Activated T-helper 1 cell treated with anti-CD3 and anti-CD28 coated beads, Interleukin-12 subunit alpha, Interleukin-12 subunit beta, Interleukin-2, Interleukin-4 antibody, amounts not matched to agents 30 ng/mL and 10 ng/mL and 1 ng/mL, durations not matched to agents 14 hours and 24 hours and 36 hours (primary cell): ENCODE measurements at regions of chr10 and their contacts with region 1.

Region 1: GRCh38 chr10:6542999-6543430 is 37.1 kb downstream of the PRKCQ start:
- DNase-seq: peak; percentile 64
- H3K4me3 Mint-ChIP-seq: peak overlapping the region; percentile 86
- H3K27ac Mint-ChIP-seq: peak overlapping the region; percentile 99
- H3K4me1 Mint-ChIP-seq: peaks cover 74% of the 10 kb centered on the region
- H3K27me3 Mint-ChIP-seq: no peaks in the 10 kb centered on the region

Region 2: DNA sequence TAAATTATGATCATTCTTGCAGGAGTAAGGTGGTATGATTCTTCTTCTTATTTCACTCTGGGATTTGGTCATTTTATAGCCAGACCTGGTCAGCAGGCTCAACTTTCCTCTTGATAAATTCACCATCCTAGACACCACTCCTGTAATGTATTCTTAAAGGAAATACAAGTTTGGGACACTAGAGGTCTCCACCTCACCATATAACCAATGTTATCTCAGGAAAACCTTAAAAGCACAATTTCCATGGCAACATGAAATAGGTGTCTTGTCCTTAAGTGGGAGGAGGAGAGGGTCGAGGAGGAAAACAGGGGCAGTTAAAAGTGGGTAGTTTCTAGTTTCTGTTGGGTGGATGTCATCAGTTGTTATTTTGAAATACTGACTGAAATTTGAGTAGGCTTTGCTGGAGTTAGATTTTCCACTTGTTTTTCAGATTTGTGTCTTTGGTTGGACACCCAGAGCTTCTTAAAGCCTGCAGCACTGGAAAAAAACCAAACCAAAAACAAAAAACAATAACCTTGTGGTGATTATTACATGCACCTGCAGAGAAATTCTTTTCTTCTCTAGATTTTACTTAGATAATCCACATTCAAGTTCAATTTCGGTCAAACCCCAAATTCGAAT is 126.0 kb before region 1 on chr10:
- intact Hi-C with region 1: loop called (anchors 1 kb)
- DNase-seq: no peak
- H3K4me3 Mint-ChIP-seq: no peak overlapping the region
- H3K27ac Mint-ChIP-seq: no peak overlapping the region
- H3K4me1 Mint-ChIP-seq: peaks cover 8% of the 10 kb centered on the region
- H3K27me3 Mint-ChIP-seq: peaks cover 1% of the 10 kb centered on the region

Region 3: DNA sequence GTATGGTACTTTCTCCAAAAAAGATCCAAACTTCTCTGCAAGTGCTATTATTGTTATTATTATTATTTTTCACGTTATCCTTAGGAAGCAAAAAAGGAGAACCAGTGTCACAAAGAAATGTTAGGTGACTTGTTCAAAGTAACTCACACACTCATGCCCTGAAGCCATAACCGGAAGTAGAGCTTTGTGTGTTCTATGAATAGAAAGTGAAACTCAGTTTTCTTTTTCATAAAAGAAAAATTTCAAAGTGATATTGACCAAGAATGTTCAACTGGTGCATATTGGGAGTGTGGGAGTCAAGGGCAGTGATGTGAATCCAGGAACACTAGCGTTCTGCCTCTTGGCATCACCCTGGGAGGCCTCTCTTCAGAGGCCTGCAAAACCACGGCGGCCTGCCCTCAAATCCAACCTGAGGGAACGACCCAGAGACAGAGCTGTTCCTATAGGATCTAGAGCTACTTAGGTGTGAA is 69.1 kb before region 1 on chr10:
- intact Hi-C with region 1: loop called (anchors 1 kb)
- DNase-seq: peak; percentile 44
- H3K4me3 Mint-ChIP-seq: peak overlapping the region; percentile 86
- H3K27ac Mint-ChIP-seq: peak overlapping the region; percentile 97
- H3K4me1 Mint-ChIP-seq: peaks cover 89% of the 10 kb centered on the region
- H3K27me3 Mint-ChIP-seq: no peaks in the 10 kb centered on the region

Region 4: DNA sequence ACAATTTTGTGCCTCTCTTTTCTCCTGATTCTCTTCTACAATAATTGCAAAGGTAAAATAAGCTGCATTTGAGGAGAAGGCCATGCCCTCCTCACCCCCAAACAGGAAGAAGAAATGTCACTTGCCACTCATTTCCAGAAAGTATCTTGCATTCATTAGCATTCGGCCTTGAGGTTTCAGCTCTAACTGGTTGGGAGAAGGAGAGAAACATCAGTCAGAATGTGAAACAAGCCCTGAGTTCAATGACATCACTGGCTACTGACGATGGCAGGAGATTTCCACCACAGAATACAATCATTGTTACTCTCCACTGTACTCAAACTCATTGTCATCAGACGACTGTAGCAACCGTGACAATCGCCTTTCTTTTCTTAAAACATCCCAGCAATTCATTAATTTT is 35.7 kb before region 1 on chr10:
- intact Hi-C with region 1: loop called (anchors 1 kb)
- DNase-seq: peak; percentile 57
- H3K4me3 Mint-ChIP-seq: peak overlapping the region; percentile 60
- H3K27ac Mint-ChIP-seq: peak overlapping the region; percentile 88
- H3K4me1 Mint-ChIP-seq: peaks cover 73% of the 10 kb centered on the region
- H3K27me3 Mint-ChIP-seq: no peaks in the 10 kb centered on the region

Region 5: GRCh38 chr10:6518791-6519429 is 24.1 kb before region 1 on chr10:
- intact Hi-C with region 1: no loop called
- DNase-seq: no peak
- H3K4me3 Mint-ChIP-seq: peak overlapping the region; percentile 54
- H3K27ac Mint-ChIP-seq: peak overlapping the region; percentile 78
- H3K4me1 Mint-ChIP-seq: peaks cover 79% of the 10 kb centered on the region
- H3K27me3 Mint-ChIP-seq: peaks cover 2% of the 10 kb centered on the region

Region 6: DNA sequence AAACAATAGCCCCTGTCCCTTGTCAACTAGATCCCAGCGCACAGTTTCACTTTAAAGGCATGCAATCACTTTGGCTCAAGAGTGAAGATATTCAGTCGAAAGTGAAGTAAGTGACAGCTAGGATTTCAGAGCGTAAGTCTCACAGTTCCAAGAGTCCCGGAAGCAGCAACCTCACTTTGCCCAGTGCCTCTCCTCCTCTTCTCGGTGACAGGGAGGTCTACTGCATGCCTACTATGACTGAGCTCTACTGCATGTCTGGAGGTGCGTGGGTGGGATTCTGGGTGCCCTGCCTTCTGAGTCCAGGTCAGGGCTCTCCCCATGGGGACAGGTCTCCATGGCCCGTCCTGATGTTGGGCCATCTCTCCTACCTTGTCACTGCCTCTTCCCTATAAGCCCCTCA is 20.1 kb after region 1 on chr10:
- intact Hi-C with region 1: loop called (anchors 1 kb)
- DNase-seq: peak; percentile 43
- H3K4me3 Mint-ChIP-seq: peak overlapping the region; percentile 74
- H3K27ac Mint-ChIP-seq: peak overlapping the region; percentile 81
- H3K4me1 Mint-ChIP-seq: peaks cover 81% of the 10 kb centered on the region
- H3K27me3 Mint-ChIP-seq: no peaks in the 10 kb centered on the region

Region 7: DNA sequence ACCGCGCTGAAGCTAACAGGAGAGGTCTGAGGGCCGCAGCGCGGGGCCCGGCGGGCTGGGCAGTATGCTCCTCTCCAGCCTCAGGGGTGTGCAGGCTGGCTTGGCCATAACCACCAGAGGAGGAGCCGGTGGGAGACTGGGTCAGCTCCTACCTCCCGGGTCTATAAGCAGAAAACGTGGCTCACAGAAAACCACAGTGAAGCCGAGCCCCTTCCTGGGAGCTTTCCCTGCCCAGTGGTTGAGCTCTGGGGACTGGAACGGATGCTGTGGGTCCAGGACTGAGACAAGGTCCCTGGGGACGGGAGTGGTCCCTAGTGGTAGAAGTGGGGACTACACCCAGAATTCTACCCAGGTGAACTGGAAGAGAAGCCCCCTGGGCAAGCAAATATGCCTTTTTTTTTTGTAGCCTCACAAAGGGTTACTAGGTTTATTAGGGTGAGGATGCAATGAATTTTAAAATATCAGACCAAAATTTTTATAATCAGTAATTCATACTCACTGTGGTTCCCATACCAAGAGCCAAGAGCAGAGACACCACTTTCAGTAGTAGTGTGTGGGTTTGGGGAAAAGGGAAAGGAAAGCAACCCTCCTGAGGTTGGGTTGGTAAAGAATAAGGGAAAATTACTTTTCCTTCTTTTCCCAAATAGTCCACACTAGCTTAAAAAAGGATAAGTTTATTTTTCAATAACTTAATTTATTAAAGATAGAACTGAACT is 105.0 kb after region 1 on chr10:
- intact Hi-C with region 1: loop called (anchors 1 kb)
- DNase-seq: peak; percentile 58
- H3K4me3 Mint-ChIP-seq: no peak overlapping the region
- H3K27ac Mint-ChIP-seq: no peak overlapping the region
- H3K4me1 Mint-ChIP-seq: peaks cover 51% of the 10 kb centered on the region
- H3K27me3 Mint-ChIP-seq: no peaks in the 10 kb centered on the region

Region 8: DNA sequence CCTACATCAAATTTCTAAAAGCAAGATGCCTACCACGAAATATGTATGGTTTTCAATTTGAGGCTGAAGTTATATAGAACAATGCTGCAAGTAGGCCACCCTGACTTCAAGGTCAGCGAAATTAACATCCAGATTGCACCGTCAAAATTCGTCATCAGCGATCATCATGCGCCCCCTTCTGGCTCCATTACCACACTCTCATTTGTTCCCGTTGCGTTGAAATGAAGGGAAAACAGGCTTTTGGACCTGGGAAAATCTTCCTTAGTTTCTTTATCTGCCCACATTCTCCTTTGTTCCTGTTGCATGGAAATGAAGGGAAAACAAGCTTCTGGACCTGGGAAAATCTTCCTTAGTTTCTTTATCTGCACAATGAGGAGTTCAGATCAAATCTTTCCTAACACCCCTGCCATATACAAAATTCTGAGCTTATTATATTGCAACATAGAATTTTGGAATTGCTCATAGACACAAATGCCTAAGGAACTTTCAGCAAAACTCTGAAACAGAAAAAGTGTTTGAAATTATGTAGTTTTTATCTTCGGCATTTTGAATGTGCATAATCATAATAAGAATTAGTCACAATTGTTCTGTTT is 135.3 kb after region 1 on chr10:
- intact Hi-C with region 1: no loop called
- DNase-seq: peak; percentile 31
- H3K4me3 Mint-ChIP-seq: no peak overlapping the region
- H3K27ac Mint-ChIP-seq: no peak overlapping the region
- H3K4me1 Mint-ChIP-seq: peaks cover 19% of the 10 kb centered on the region
- H3K27me3 Mint-ChIP-seq: peaks cover 38% of the 10 kb centered on the region

Region 9: GRCh38 chr10:7666253-7667081 is 1123.5 kb after region 1 on chr10 and contains the start of gene ITIH5:
- intact Hi-C with region 1: no loop called
- DNase-seq: no peak
- H3K4me3 Mint-ChIP-seq: peak within 1 kb of the TSS; percentile 57
- H3K27ac Mint-ChIP-seq: no peak within 1 kb of the TSS
- H3K4me1 Mint-ChIP-seq: peaks cover 12% of the 10 kb centered on the region
- H3K27me3 Mint-ChIP-seq: peaks cover 56% of the 10 kb centered on the region
- total RNA-seq, gene ITIH5: not detected in 2 replicates